Left ventricle myocardium inferior (tissue), 1 donor: ENCODE measurements at regions of chr3 and their contacts with region 1.

Region 1: GRCh38 chr3:140972833-140973232 is 31.2 kb downstream of the SLC25A36 start:
- DNase-seq: no peak
- H3K4me3 ChIP-seq: no peak overlapping the region
- H3K27ac ChIP-seq: no peak overlapping the region
- H3K4me1 ChIP-seq: peaks cover 16% of the 10 kb centered on the region
- H3K27me3 ChIP-seq: no peaks in the 10 kb centered on the region
- CTCF ChIP-seq: peak; percentile 51

Region 2: GRCh38 chr3:140910860-140911259 is 62.0 kb before region 1 on chr3:
- intact Hi-C with region 1: loop called (anchors 10 kb)
- DNase-seq: no peak
- H3K4me3 ChIP-seq: peak overlapping the region; percentile 38
- H3K27ac ChIP-seq: no peak overlapping the region
- H3K4me1 ChIP-seq: no peaks in the 10 kb centered on the region
- H3K27me3 ChIP-seq: no peaks in the 10 kb centered on the region
- CTCF ChIP-seq: no peak